ENCODE measurements at regions of chr9 and their contacts with region 1.

Region 1: GRCh38 chr9:89442981-89443814 is 54.7 kb downstream of the SEMA4D start:
- DNase-seq: peak in 2 of 14 experiments; percentile 49 to 60
- ATAC-seq: no peak
- H3K4me3 ChIP-seq: no peak overlapping the region
- H3K4me3 Mint-ChIP-seq: no peak overlapping the region
- H3K27ac ChIP-seq: peak overlapping the region; percentile 66 to 71
- H3K27ac Mint-ChIP-seq: peak overlapping the region; percentile 96
- H3K4me1 ChIP-seq: peaks cover 99% of the 10 kb centered on the region
- H3K4me1 Mint-ChIP-seq: peaks cover 86% of the 10 kb centered on the region
- H3K27me3 ChIP-seq: no peaks in the 10 kb centered on the region
- H3K27me3 Mint-ChIP-seq: no peaks in the 10 kb centered on the region
- CTCF ChIP-seq: no peak

Region 2: DNA sequence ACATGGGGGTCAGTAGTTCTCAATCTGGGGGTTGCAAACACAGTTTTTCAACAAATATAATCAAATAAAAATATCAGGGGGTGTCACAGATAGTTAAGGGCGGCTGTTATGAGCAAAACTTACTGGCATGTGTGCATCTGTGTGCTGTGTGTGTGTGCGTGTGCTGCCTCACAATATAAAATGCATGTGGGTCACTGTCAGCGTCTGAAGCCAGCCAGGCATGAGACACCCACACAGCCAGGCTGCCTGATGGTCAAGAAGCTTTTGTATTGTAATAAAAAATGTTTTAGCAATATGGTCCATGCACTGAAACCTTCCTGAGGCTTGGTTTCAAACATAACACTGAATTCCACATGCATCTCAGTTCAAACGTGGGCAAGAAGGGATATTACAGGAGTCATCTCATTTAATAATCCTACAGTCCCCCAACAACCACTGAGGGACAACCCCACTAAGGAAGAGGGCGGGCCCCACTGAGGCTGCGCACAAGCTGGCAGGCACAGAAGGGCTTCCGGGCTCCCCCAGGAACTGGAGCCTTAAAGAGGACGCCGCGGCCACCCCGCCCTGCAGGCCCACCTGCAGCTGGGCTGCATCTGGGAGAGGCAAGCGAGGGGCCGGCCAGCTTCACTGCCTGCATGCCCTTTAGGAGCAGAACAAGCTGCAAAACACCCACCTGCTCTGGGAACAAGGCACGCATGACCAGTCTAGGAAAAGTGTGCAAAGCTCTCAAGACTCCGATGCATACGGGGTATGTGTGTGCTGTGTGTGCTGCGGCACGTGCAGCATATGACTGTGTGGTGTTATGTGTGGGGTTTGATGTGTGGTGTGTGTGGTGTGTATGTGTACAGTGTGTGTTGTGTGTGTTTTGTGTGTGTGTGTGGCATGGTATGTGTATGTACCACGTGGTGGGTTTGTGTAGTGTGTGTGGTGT is 40.7 kb after region 1 on chr9:
- CTCF ChIA-PET with region 1: interaction called, 3 read pairs
- POLR2A ChIA-PET with region 1: interaction called, 15 read pairs
- intact Hi-C with region 1: loop called (anchors 2 to 5 kb)
- DNase-seq: peak in 13 of 14 experiments; percentile 54 to 87 (median 70)
- ATAC-seq: peak; percentile 72
- H3K4me3 ChIP-seq: peak overlapping the region; percentile 72
- H3K4me3 Mint-ChIP-seq: peak overlapping the region; percentile 94
- H3K27ac ChIP-seq: peak overlapping the region; percentile 52 to 67
- H3K27ac Mint-ChIP-seq: peak overlapping the region; percentile 88
- H3K4me1 ChIP-seq: peaks cover 77% of the 10 kb centered on the region
- H3K4me1 Mint-ChIP-seq: peaks cover 91% of the 10 kb centered on the region
- H3K27me3 ChIP-seq: no peaks in the 10 kb centered on the region
- H3K27me3 Mint-ChIP-seq: no peaks in the 10 kb centered on the region
- CTCF ChIP-seq: no peak